ENCODE measurements at regions of chr22 and their contacts with region 1.

Region 1: GRCh38 chr22:42269407-42270177 is 861 bp downstream of the TCF20 start:
- DNase-seq: peak; percentile 83
- ATAC-seq: peak; percentile 76
- H3K4me3 Mint-ChIP-seq: peak overlapping the region; percentile 91
- H3K27ac Mint-ChIP-seq: peak overlapping the region; percentile 73
- H3K4me1 Mint-ChIP-seq: peaks cover 40% of the 10 kb centered on the region
- H3K27me3 Mint-ChIP-seq: no peaks in the 10 kb centered on the region
- CTCF ChIP-seq: no peak

Region 2: GRCh38 chr22:41983513-41984405 is 285.8 kb before region 1 on chr22:
- CTCF ChIA-PET with region 1: no interaction called
- POLR2A ChIA-PET with region 1: no interaction called
- intact Hi-C with region 1: no loop called
- DNase-seq: no peak
- ATAC-seq: no peak
- H3K4me3 Mint-ChIP-seq: no peak overlapping the region
- H3K27ac Mint-ChIP-seq: no peak overlapping the region
- H3K4me1 Mint-ChIP-seq: no peaks in the 10 kb centered on the region
- H3K27me3 Mint-ChIP-seq: peaks cover 7% of the 10 kb centered on the region
- CTCF ChIP-seq: no peak

Region 3: GRCh38 chr22:42179616-42180015 is 90.0 kb before region 1 on chr22:
- CTCF ChIA-PET with region 1: no interaction called
- POLR2A ChIA-PET with region 1: no interaction called
- intact Hi-C with region 1: loop called (anchors 10 kb)
- DNase-seq: no peak
- ATAC-seq: no peak
- H3K4me3 Mint-ChIP-seq: no peak overlapping the region
- H3K27ac Mint-ChIP-seq: peak overlapping the region; percentile 77
- H3K4me1 Mint-ChIP-seq: peaks cover 69% of the 10 kb centered on the region
- H3K27me3 Mint-ChIP-seq: no peaks in the 10 kb centered on the region
- CTCF ChIP-seq: no peak